B cell (primary cell): ENCODE measurements at regions of chr17 and their contacts with region 1.

Region 1: GRCh38 chr17:65100316-65101140 is 36.6 kb upstream of the RGS9 start:
- DNase-seq: peak; percentile 90
- ATAC-seq: peak; percentile 82
- H3K4me3 ChIP-seq: peak overlapping the region; percentile 50 to 65 (median 51)
- H3K4me3 Mint-ChIP-seq: peak overlapping the region; percentile 95
- H3K27ac ChIP-seq: peak overlapping the region; percentile 70 to 81
- H3K27ac Mint-ChIP-seq: peak overlapping the region; percentile 96
- H3K4me1 ChIP-seq: peaks cover 14 to 20% of the 10 kb centered on the region in 2 donors
- H3K4me1 Mint-ChIP-seq: peaks cover 19% of the 10 kb centered on the region
- H3K27me3 ChIP-seq: no peaks in the 10 kb centered on the region
- H3K27me3 Mint-ChIP-seq: no peaks in the 10 kb centered on the region
- CTCF ChIP-seq: peak; percentile 79

Region 2: GRCh38 chr17:64778240-64779097 is 322.1 kb before region 1 on chr17:
- CTCF ChIA-PET with region 1: interaction called, 7 read pairs
- POLR2A ChIA-PET with region 1: no interaction called
- intact Hi-C with region 1: loop called (anchors 5 kb)
- DNase-seq: peak; percentile 61
- ATAC-seq: peak; percentile 14
- H3K4me3 ChIP-seq: peak overlapping the region; percentile 12 to 55 (median 51)
- H3K4me3 Mint-ChIP-seq: peak overlapping the region; percentile 94
- H3K27ac ChIP-seq: no peak overlapping the region
- H3K27ac Mint-ChIP-seq: peak overlapping the region; percentile 76
- H3K4me1 ChIP-seq: peaks cover 37 to 56% of the 10 kb centered on the region in 2 donors
- H3K4me1 Mint-ChIP-seq: peaks cover 45% of the 10 kb centered on the region
- H3K27me3 ChIP-seq: peaks cover 0 to 32% (median 10%) of the 10 kb centered on the region in 4 experiments
- H3K27me3 Mint-ChIP-seq: peaks cover 3% of the 10 kb centered on the region
- CTCF ChIP-seq: no peak

Region 3: DNA sequence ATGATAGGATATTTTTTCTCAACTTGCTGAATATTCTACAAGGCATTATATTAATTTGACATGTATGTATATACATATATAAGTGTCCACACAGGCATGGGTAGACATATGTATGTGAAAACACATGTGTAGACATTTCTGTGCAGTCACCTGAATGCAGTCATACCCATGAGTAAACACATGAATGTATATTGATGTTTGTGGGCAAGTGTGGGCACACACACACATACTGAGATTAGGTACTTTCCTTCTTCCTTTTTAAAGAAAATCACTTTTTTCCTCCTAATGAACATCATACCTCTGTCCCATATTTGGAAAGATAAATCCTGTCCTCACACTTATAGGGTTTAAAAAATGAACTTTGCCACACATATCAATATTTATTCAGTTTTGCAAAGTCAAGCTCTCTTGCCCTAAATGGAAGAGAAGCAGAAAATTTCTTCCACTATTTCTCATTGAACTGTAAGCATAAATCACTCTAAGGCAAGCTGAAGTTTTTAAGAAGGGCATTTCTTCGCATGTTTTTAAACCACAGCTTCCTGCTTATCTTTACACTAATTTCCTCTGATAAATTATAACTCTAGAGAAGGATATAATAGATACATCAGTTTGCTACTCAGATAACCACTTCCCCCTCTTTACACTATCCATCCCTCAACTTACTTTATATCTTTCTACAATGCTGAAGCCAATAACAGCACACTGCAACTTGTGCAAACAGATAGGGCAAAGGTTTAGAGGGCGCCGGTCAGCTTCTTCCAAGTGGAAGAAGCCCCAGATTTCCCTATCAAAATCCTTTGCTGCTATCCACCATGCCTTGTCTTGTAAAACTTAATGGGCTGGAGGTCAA is 131.7 kb before region 1 on chr17:
- CTCF ChIA-PET with region 1: interaction called, 79 read pairs
- POLR2A ChIA-PET with region 1: interaction called, 14 read pairs
- intact Hi-C with region 1: no loop called
- DNase-seq: peak; percentile 37
- ATAC-seq: no peak
- H3K4me3 ChIP-seq: no peak overlapping the region
- H3K4me3 Mint-ChIP-seq: peak overlapping the region; percentile 65
- H3K27ac ChIP-seq: peak overlapping the region; percentile 2 to 73
- H3K27ac Mint-ChIP-seq: peak overlapping the region; percentile 81
- H3K4me1 ChIP-seq: peaks cover 59 to 66% of the 10 kb centered on the region in 2 donors
- H3K4me1 Mint-ChIP-seq: peaks cover 80% of the 10 kb centered on the region
- H3K27me3 ChIP-seq: no peaks in the 10 kb centered on the region
- H3K27me3 Mint-ChIP-seq: no peaks in the 10 kb centered on the region
- CTCF ChIP-seq: no peak

Region 4: GRCh38 chr17:64984851-64985521 is 115.5 kb before region 1 on chr17:
- CTCF ChIA-PET with region 1: interaction called, 24 read pairs
- POLR2A ChIA-PET with region 1: interaction called, 12 read pairs
- intact Hi-C with region 1: loop called (anchors 1 kb)
- DNase-seq: peak; percentile 44
- ATAC-seq: no peak
- H3K4me3 ChIP-seq: peak overlapping the region in 1 of 5 experiments; percentile 50
- H3K4me3 Mint-ChIP-seq: peak overlapping the region; percentile 81
- H3K27ac ChIP-seq: peak overlapping the region; percentile 99 to 100
- H3K27ac Mint-ChIP-seq: peak overlapping the region; percentile 99
- H3K4me1 ChIP-seq: peaks cover 33 to 49% of the 10 kb centered on the region in 2 donors
- H3K4me1 Mint-ChIP-seq: peaks cover 51% of the 10 kb centered on the region
- H3K27me3 ChIP-seq: no peaks in the 10 kb centered on the region
- H3K27me3 Mint-ChIP-seq: no peaks in the 10 kb centered on the region
- CTCF ChIP-seq: no peak

Region 5: DNA sequence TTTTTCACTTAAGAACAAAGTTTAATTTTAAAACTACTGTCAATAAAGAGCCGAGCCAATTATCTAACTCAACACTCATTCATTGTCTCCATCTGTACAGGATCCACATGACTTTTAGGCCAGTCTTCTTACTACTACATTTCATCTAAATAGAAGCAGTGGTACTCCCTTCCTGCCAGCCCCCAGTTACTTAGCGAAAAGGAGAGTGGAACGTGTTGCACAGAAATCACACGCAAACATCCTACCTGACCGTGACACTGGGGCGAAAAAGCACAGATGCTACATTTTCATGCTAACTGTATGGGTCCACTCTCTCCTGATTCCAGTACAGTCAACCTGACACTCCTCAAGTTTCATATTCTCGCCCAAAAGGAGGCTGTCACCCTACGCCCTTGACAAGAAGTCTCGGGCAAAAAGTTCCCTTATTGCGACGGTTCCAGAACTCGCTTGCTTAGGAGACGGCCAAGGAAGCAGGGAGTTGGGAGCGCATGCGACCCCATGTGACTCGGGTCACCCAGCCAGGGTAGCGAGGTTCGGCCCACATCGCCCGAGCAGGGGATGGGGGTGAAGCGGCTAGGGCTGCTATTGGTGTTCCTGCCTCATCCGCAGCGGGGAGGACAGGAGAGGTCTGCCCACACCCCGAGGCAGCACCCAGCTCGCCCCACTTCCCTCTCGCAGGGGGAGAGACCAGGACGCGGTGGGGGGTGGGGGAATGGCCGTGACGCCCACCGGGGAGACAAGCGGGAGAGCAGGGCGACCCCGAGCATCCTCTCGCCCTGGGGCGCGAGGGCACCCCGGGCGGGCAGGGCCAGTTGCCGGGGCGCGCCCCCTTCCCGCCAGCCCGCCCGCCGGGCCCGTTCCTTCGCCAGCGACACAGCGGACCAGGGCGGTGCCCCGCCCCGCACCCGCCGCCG is 44.9 kb before region 1 on chr17:
- CTCF ChIA-PET with region 1: interaction called, 9 read pairs
- POLR2A ChIA-PET with region 1: interaction called, 33 read pairs
- intact Hi-C with region 1: loop called (anchors 1 kb)
- DNase-seq: peak; percentile 68
- ATAC-seq: peak; percentile 13
- H3K4me3 ChIP-seq: peak overlapping the region; percentile 85 to 99 (median 90)
- H3K4me3 Mint-ChIP-seq: peak overlapping the region; percentile 99
- H3K27ac ChIP-seq: peak overlapping the region; percentile 96 to 97
- H3K27ac Mint-ChIP-seq: peak overlapping the region; percentile 98
- H3K4me1 ChIP-seq: peaks cover 21 to 25% of the 10 kb centered on the region in 2 donors
- H3K4me1 Mint-ChIP-seq: peaks cover 52% of the 10 kb centered on the region
- H3K27me3 ChIP-seq: no peaks in the 10 kb centered on the region
- H3K27me3 Mint-ChIP-seq: no peaks in the 10 kb centered on the region
- CTCF ChIP-seq: no peak

Region 6: DNA sequence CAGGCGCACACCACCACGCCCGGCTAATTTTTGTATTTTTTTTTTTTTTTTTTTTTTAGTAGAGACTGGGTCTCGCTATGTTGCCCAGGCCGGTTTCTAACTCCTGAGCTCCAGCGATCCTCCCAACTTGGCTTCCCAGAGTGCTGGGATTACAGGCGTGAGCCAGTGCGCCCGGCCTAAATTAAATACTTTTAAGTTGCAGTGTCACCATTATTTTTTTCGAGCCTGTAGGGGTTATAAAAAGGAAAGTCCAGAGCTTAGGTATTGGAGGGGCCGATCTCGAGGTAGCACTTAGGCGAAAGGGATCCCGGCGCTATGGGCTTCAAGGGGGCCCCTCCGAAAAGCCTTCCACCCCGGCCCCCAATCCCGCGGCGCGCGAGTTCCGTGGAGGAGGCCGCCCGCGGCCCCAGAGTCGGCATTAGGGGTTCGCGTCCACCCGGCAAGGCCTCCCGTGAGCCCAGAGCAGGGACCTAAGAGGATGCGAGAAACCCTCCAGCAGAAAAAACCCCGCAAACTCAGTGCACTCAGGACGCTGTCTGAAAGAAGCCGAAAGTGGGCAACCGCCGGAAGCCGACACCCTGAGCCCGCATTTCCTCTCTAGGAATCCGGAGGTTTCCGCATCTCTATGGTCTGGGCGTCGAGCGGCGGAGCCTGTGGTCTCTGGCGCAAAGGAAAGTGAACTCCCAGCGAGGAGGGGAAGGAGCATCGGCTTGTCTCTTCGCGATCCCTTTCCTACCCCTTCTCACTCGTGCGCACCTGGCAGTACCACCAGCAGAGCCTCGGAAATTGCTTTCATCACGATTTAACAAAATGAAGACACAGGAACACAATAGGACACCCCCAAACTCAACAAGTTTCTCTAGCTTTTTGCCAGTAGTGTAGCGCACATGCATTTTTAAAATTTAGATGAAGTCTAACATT is 22.6 kb after region 1 on chr17:
- CTCF ChIA-PET with region 1: interaction called, 6 read pairs
- POLR2A ChIA-PET with region 1: no interaction called
- intact Hi-C with region 1: loop called (anchors 1 kb)
- DNase-seq: peak; percentile 93
- ATAC-seq: peak; percentile 88
- H3K4me3 ChIP-seq: peak overlapping the region; percentile 57 to 79 (median 68)
- H3K4me3 Mint-ChIP-seq: peak overlapping the region; percentile 95
- H3K27ac ChIP-seq: peak overlapping the region; percentile 64 to 84
- H3K27ac Mint-ChIP-seq: peak overlapping the region; percentile 97
- H3K4me1 ChIP-seq: peaks cover 9 to 13% of the 10 kb centered on the region in 2 donors
- H3K4me1 Mint-ChIP-seq: peaks cover 14% of the 10 kb centered on the region
- H3K27me3 ChIP-seq: peaks cover 0 to 7% (median 0%) of the 10 kb centered on the region in 4 experiments
- H3K27me3 Mint-ChIP-seq: no peaks in the 10 kb centered on the region
- CTCF ChIP-seq: no peak

Region 7: GRCh38 chr17:65198653-65199382 is 98.3 kb after region 1 on chr17:
- CTCF ChIA-PET with region 1: interaction called, 5 read pairs
- POLR2A ChIA-PET with region 1: no interaction called
- intact Hi-C with region 1: loop called (anchors 1 kb)
- DNase-seq: peak; percentile 73
- ATAC-seq: peak; percentile 53
- H3K4me3 ChIP-seq: no peak overlapping the region
- H3K4me3 Mint-ChIP-seq: no peak overlapping the region
- H3K27ac ChIP-seq: no peak overlapping the region
- H3K27ac Mint-ChIP-seq: no peak overlapping the region
- H3K4me1 ChIP-seq: no peaks in the 10 kb centered on the region
- H3K4me1 Mint-ChIP-seq: peaks cover 2% of the 10 kb centered on the region
- H3K27me3 ChIP-seq: no peaks in the 10 kb centered on the region
- H3K27me3 Mint-ChIP-seq: no peaks in the 10 kb centered on the region
- CTCF ChIP-seq: peak; percentile 89

Region 8: GRCh38 chr17:65294179-65294720 is 193.7 kb after region 1 on chr17:
- CTCF ChIA-PET with region 1: no interaction called
- POLR2A ChIA-PET with region 1: no interaction called
- intact Hi-C with region 1: no loop called
- DNase-seq: peak; percentile 36
- ATAC-seq: peak; percentile 33
- H3K4me3 ChIP-seq: no peak overlapping the region
- H3K4me3 Mint-ChIP-seq: no peak overlapping the region
- H3K27ac ChIP-seq: no peak overlapping the region
- H3K27ac Mint-ChIP-seq: no peak overlapping the region
- H3K4me1 ChIP-seq: no peaks in the 10 kb centered on the region
- H3K4me1 Mint-ChIP-seq: no peaks in the 10 kb centered on the region
- H3K27me3 ChIP-seq: no peaks in the 10 kb centered on the region
- H3K27me3 Mint-ChIP-seq: peaks cover 12% of the 10 kb centered on the region
- CTCF ChIP-seq: peak; percentile 49

Region 9: GRCh38 chr17:65956814-65957213 is 856.3 kb after region 1 on chr17:
- CTCF ChIA-PET with region 1: no interaction called
- POLR2A ChIA-PET with region 1: no interaction called
- intact Hi-C with region 1: no loop called
- DNase-seq: no peak
- ATAC-seq: no peak
- H3K4me3 ChIP-seq: no peak overlapping the region
- H3K4me3 Mint-ChIP-seq: no peak overlapping the region
- H3K27ac ChIP-seq: no peak overlapping the region
- H3K27ac Mint-ChIP-seq: no peak overlapping the region
- H3K4me1 ChIP-seq: no peaks in the 10 kb centered on the region
- H3K4me1 Mint-ChIP-seq: no peaks in the 10 kb centered on the region
- H3K27me3 ChIP-seq: no peaks in the 10 kb centered on the region
- H3K27me3 Mint-ChIP-seq: no peaks in the 10 kb centered on the region
- CTCF ChIP-seq: no peak